ENCODE measurements at regions of chr17 and their contacts with region 1.

Region 1: GRCh38 chr17:32609085-32609484 is 122.3 kb downstream of the CDK5R1 start:
- DNase-seq: peak; percentile 67 to 74 (median 73)
- H3K4me3 ChIP-seq: no peak overlapping the region
- H3K4me3 Mint-ChIP-seq: no peak overlapping the region
- H3K27ac ChIP-seq: no peak overlapping the region
- H3K27ac Mint-ChIP-seq: peak overlapping the region in 3 of 7 donors; percentile 3 to 56 (median 11)
- H3K4me1 ChIP-seq: no peaks in the 10 kb centered on the region
- H3K4me1 Mint-ChIP-seq: peaks cover 5 to 9% (median 5%) of the 10 kb centered on the region in 4 donors
- H3K27me3 ChIP-seq: no peaks in the 10 kb centered on the region
- H3K27me3 Mint-ChIP-seq: no peaks in the 10 kb centered on the region

Region 2: DNA sequence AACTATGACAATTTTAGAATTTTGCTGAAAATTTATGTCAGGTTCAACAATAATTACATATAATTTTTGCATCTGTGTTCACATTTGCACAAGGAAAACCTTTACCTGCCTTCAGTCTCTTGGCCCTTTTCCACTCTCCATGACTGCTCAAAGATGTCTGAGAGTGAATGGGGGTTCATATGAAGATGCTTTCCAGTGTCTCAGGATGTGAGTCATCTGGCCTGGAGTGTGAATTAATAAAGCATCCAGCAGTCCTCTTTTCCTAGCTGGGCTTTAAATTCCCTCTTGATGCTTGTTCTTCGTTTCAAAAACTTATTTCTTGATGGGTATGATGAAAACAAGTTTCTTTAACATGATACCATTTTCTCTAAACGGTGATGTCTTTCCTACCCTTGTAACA is 22.4 kb before region 1 on chr17:
- CTCF ChIA-PET with region 1: no interaction called
- POLR2A ChIA-PET with region 1: no interaction called
- intact Hi-C with region 1: no loop called
- DNase-seq: no peak
- H3K4me3 ChIP-seq: no peak overlapping the region
- H3K4me3 Mint-ChIP-seq: no peak overlapping the region
- H3K27ac ChIP-seq: no peak overlapping the region
- H3K27ac Mint-ChIP-seq: no peak overlapping the region
- H3K4me1 ChIP-seq: no peaks in the 10 kb centered on the region
- H3K4me1 Mint-ChIP-seq: peaks cover 0 to 2% (median 0%) of the 10 kb centered on the region in 4 donors
- H3K27me3 ChIP-seq: no peaks in the 10 kb centered on the region
- H3K27me3 Mint-ChIP-seq: no peaks in the 10 kb centered on the region

Region 3: DNA sequence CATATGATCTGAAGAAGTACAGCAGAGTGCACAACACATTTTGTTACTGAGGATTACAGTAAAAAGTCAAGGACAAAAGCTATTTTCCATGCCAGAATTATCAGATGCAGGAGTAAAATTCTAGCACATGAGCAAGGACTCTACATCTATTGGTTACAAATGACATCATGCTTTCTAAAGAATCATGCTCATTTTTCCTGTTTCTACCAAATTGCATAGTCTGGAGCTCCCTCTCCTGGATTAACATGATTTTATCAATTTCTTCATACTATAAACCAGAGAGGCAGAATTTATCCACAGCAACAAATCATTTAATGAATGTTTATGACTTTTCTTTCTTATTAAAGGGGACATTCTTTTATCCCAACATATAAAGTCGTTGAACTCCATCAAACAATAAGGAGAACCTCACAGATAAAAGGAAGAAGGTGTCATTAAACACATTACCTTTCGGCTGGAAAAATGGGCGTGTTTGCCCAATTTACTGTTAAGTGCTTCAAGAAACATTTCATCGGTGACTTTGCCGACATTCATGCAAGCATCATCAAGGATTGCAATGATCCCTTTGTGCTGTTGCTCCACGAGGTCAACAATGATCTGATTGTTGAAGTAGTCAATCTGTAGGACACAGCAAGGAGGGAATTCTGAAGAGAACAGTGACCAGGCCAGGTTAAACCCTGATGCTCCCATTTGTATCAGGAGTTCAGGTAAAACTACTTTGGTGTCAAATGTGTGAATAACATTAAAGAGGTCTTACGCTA is 146.1 kb after region 1 on chr17:
- CTCF ChIA-PET with region 1: no interaction called
- POLR2A ChIA-PET with region 1: no interaction called
- intact Hi-C with region 1: loop called (anchors 1 kb)
- DNase-seq: peak in 4 of 5 donors; percentile 51 to 57 (median 52)
- H3K4me3 ChIP-seq: no peak overlapping the region
- H3K4me3 Mint-ChIP-seq: no peak overlapping the region
- H3K27ac ChIP-seq: no peak overlapping the region
- H3K27ac Mint-ChIP-seq: peak overlapping the region in 1 of 7 donors; percentile 30
- H3K4me1 ChIP-seq: peaks cover 13% of the 10 kb centered on the region
- H3K4me1 Mint-ChIP-seq: peaks cover 9 to 13% (median 13%) of the 10 kb centered on the region in 4 donors
- H3K27me3 ChIP-seq: no peaks in the 10 kb centered on the region
- H3K27me3 Mint-ChIP-seq: no peaks in the 10 kb centered on the region

Measured in CD4-positive, alpha-beta memory T cell (primary cell).